ENCODE measurements at regions of chr1 and their contacts with region 1.

Region 1: GRCh38 chr1:153670859-153671627 is at the start of gene ILF2:
- DNase-seq: peak; percentile 96
- H3K4me3 Mint-ChIP-seq: no peak within 1 kb of the TSS
- H3K27ac Mint-ChIP-seq: peak within 1 kb of the TSS; percentile 56
- H3K4me1 Mint-ChIP-seq: peaks cover 29% of the 10 kb centered on the region
- H3K27me3 Mint-ChIP-seq: no peaks in the 10 kb centered on the region
- total RNA-seq, gene ILF2: 354 and 366 TPM in 2 replicates

Region 2: GRCh38 chr1:153545067-153546055 is 125.7 kb before region 1 on chr1 and contains the start of gene S100A4:
- intact Hi-C with region 1: loop called (anchors 2 kb)
- DNase-seq: peak; percentile 93
- H3K4me3 Mint-ChIP-seq: peak within 1 kb of the TSS; percentile 90
- H3K27ac Mint-ChIP-seq: peak within 1 kb of the TSS; percentile 99
- H3K4me1 Mint-ChIP-seq: peaks cover 83% of the 10 kb centered on the region
- H3K27me3 Mint-ChIP-seq: peaks cover 2% of the 10 kb centered on the region
- total RNA-seq, gene S100A4: 165 and 167 TPM in 2 replicates

Region 3: DNA sequence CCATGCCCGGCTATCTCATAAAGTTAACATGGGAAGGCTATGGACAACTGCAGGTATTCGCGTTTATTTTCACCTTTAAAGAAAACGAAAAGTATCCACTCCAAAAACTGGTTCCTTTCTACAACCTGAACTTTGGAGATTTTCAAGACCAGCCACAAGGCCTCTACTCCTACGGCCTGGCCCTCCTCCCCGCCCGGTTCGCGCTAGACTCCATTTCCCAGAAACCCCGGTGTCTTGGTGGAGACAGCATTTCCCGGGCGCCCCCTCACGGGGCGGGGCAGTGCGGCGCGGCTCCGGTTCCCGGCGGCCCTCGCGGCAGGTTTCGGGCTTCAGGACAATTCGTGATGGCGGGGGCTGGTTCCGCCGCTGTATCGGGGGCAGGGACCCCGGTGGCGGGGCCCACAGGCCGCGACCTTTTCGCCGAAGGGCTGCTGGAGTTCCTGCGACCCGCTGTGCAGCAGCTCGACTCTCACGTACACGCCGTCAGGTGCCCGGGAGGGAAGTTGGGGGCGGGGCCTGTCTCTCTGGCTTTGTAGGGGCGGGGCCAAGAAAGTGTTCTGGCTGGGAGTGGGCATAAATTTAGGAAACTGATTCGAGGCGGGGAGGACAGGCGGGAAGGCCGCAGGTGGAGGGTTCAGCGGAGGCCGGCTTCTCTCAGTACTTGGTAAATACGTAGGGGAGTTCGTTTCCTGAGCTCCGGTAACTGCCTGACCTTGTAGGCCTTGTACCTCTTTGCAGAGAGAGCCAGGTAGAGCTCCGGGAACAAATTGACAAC is 12.5 kb before region 1 on chr1 and contains the start of gene SNAPIN:
- intact Hi-C with region 1: loop called (anchors 1 kb)
- DNase-seq: peak; percentile 90
- H3K4me3 Mint-ChIP-seq: peak within 1 kb of the TSS; percentile 96
- H3K27ac Mint-ChIP-seq: peak within 1 kb of the TSS; percentile 84
- H3K4me1 Mint-ChIP-seq: peaks cover 11% of the 10 kb centered on the region
- H3K27me3 Mint-ChIP-seq: no peaks in the 10 kb centered on the region
- total RNA-seq, gene SNAPIN: 31.1 and 35.4 TPM in 2 replicates

Region 4: DNA sequence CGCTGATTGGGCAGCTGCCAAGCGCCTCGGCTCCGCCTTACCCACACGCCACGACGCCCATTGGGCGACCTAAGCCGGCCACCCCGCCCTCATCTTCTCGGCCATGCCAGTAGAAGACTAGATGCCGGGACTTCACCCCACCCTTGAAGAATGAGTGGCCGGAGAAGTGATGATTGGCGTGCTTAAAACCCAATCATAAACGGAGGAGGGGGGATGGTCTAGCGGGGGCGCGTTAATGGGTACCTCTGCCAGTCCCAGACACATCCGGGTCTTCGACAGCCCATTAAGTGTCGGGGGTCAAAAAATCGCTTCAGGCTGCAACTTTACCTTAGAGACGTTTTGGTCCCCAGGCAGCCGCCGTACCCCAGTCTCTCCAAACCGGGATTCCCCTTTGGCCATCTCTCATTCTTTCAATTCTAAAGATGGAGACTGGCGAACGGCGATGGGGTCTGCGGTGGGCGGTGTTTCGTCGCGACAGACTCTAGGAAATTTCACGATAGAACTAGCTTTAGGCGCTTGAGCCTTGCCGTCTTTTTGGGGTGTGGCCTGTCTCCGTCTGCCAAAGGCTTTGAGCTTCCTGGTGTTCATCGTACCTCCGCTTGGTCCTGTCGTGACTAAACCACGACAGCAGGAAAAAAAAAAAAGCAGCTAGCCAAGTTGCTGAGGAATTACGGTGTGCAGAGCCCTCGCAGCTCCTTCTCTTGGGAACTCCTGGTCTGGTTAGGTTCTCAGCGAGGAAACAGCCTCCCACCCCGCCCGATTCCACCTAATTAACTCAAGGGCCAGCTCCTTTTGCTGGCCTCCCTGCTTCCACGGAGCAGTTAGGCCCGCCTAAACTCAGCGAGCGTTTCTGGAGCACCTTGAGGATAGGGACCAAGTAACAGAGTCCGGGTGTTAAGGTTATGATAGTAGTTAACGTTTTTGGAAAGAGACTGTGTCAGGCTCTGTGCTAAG is 252.2 kb after region 1 on chr1 and contains the start of gene GATAD2B:
- intact Hi-C with region 1: loop called (anchors 1 kb)
- DNase-seq: peak; percentile 99
- H3K4me3 Mint-ChIP-seq: peak within 1 kb of the TSS; percentile 97
- H3K27ac Mint-ChIP-seq: peak within 1 kb of the TSS; percentile 92
- H3K4me1 Mint-ChIP-seq: peaks cover 53% of the 10 kb centered on the region
- H3K27me3 Mint-ChIP-seq: peaks cover 2% of the 10 kb centered on the region
- total RNA-seq, gene GATAD2B: 69.1 and 70.4 TPM in 2 replicates

Region 5: DNA sequence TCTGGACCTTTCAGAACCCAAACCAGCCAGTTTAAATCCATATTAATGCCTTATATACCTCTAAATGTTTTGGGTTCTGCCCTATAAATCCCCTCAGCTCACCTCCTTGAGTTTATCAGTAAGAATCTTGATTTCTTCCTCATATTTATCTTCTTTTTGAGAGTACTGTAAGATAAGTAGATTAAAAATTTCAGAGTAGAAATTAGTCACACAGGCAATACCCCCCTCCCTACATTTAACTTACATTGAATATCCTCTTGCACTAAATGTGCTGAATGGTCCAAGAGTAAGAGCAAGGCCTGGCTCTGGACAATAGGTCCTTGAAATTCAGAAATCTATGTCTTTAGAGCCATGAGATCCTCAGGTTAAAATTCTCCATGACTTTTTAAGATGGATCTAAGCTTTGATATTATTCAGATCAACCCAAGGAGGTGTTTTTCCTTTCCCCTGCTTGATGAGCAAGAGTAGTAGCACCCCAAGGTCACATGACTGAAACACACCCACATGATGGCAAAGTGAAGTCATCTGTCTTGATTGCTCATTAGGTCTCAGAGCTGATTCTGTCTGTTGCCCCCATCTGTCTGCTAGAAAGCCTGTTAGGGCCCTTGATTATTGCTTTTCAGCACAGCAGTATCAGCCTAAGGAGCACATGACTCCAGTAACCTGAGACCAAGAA is 499.6 kb after region 1 on chr1:
- intact Hi-C with region 1: loop called (anchors 2 kb)
- DNase-seq: no peak
- H3K4me3 Mint-ChIP-seq: peak overlapping the region; percentile 47
- H3K27ac Mint-ChIP-seq: peak overlapping the region; percentile 87
- H3K4me1 Mint-ChIP-seq: peaks cover 46% of the 10 kb centered on the region
- H3K27me3 Mint-ChIP-seq: no peaks in the 10 kb centered on the region